Activated T-helper 1 cell treated with anti-CD3 and anti-CD28 coated beads, Interleukin-12 subunit alpha, Interleukin-12 subunit beta, Interleukin-2, Interleukin-4 antibody, amounts not matched to agents 30 ng/mL and 10 ng/mL and 1 ng/mL, durations not matched to agents 14 hours and 24 hours and 36 hours (primary cell): ENCODE measurements at regions of chr9 and their contacts with region 1.

Region 1: GRCh38 chr9:91395553-91396471 is 27.8 kb downstream of the NFIL3 start:
- DNase-seq: peak; percentile 33
- H3K4me3 Mint-ChIP-seq: peak overlapping the region; percentile 73
- H3K27ac Mint-ChIP-seq: peak overlapping the region; percentile 84
- H3K4me1 Mint-ChIP-seq: peaks cover 21% of the 10 kb centered on the region
- H3K27me3 Mint-ChIP-seq: peaks cover 11% of the 10 kb centered on the region

Region 2: DNA sequence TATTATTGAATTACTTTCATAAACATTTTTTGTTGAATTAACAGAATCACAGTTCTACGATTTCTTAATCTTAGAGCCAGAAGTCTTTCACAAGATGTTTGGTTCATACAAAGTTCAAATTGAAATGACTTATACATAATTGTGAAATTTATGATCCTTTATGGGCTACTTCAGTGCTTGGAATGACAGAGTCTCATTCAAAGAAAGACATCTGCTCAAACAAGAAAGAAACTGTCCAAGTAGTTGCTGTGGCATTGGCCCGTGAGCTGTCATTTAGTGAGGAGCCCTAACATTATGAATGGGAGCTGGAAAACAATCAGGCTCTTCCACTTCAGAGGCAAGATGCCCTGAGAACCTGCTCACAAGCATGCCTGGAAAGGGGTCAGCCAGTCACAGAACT is 97.5 kb before region 1 on chr9:
- intact Hi-C with region 1: no loop called
- DNase-seq: no peak
- H3K4me3 Mint-ChIP-seq: no peak overlapping the region
- H3K27ac Mint-ChIP-seq: no peak overlapping the region
- H3K4me1 Mint-ChIP-seq: peaks cover 13% of the 10 kb centered on the region
- H3K27me3 Mint-ChIP-seq: no peaks in the 10 kb centered on the region

Region 3: GRCh38 chr9:91415290-91415689 is 19.5 kb after region 1 on chr9:
- intact Hi-C with region 1: loop called (anchors 1 kb)
- DNase-seq: no peak
- H3K4me3 Mint-ChIP-seq: no peak overlapping the region
- H3K27ac Mint-ChIP-seq: peak overlapping the region; percentile 85
- H3K4me1 Mint-ChIP-seq: peaks cover 92% of the 10 kb centered on the region
- H3K27me3 Mint-ChIP-seq: no peaks in the 10 kb centered on the region

Region 4: GRCh38 chr9:91489361-91489899 is 93.6 kb after region 1 on chr9:
- intact Hi-C with region 1: no loop called
- DNase-seq: no peak
- H3K4me3 Mint-ChIP-seq: no peak overlapping the region
- H3K27ac Mint-ChIP-seq: no peak overlapping the region
- H3K4me1 Mint-ChIP-seq: no peaks in the 10 kb centered on the region
- H3K27me3 Mint-ChIP-seq: peaks cover 10% of the 10 kb centered on the region